ENCODE measurements at regions of chr11 and their contacts with region 1.

Region 1: DNA sequence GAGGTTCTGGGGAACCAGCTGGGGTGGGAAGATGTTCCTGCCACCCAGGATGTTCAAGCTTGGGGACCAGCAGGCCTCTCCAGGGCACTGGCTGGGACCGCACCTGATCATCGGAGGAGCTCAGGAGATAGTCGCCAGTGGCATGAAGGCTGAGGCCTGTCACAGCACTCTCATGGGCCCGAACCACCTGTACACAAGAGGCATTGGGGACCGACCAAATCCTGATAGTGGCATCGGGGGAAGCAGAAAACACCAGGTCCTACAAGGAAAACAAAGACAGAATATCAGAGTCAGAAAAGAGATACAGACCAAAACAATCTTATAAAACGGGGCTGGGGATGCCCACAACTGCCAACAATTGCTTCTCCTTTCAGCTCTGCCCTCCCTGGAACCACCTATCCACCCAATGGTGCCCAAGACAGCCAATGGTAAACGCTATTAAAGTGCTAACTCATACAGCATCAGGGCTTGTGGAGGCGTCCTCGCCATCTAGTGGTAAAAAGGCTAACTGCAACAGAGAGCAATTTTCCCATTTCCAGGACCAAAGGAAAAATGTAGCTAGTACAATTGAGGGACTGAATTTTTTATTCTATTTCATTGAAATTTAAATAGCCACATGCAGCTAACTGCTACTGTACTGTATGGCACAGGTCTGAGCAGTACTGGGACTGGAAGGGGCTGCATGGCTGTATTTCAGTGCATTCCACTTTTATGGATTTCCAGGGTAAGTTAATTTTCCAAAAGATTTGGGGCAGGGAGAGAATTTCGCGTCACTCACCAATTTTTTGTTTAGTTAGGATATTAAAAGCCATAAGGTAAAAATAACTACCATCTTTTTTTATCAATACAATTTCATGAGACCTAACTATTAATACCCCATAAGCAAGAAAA is 7.1 kb downstream of the PRPF19 start:
- DNase-seq: peak; percentile 41 to 69
- H3K4me3 ChIP-seq: no peak overlapping the region
- H3K4me1 ChIP-seq: no peaks in the 10 kb centered on the region
- H3K27me3 ChIP-seq: no peaks in the 10 kb centered on the region

Region 2: DNA sequence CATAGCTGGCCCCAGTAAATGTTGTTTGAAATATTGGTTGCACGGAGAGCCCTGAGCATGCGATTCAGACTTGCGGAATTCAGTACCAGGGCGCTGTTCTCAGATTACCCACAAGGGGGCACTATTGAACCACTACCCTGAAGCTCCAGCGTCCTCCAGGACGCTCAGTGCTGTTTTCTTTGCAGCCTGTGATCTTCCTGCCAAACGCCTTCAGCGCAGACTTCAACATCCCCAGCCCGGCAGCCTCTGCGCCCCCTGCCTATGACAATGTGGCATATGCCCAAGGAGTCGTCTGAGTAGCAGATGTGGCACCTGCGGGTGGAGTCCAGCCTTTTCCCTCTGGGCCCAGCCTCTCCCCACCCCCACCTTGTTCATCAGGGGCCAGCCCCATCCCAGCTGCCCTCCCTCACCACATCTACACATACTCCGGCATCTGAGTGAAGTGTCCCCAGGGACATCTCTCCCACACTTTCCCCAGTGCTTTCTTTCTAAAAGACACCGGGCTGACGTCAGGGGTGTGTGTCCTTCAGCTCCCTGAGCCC is 123.8 kb before region 1 on chr11:
- in situ Hi-C with region 1: loop called (anchors 10 kb)
- DNase-seq: peak; percentile 84 to 90
- H3K4me3 ChIP-seq: no peak overlapping the region
- H3K4me1 ChIP-seq: no peaks in the 10 kb centered on the region
- H3K27me3 ChIP-seq: no peaks in the 10 kb centered on the region

Region 3: DNA sequence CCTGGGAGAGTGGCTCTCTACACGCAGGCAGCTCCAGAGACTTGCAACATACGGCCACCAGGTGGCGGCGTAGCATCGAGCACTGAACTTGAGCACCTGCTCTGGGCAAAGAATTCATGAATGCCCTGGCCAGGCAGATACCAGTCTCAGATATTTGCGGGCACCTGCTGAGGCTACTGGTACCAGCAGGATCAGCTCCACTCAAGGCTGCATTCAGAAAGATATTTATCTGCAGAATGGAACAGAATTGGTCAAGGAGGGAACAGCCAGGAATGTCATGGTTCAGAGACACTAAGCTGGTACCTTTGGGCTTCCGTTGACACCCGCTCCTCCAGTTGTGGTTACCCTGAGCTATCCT is 68.2 kb before region 1 on chr11:
- in situ Hi-C with region 1: no loop called
- DNase-seq: peak; percentile 44 to 86
- H3K4me3 ChIP-seq: no peak overlapping the region
- H3K4me1 ChIP-seq: no peaks in the 10 kb centered on the region
- H3K27me3 ChIP-seq: no peaks in the 10 kb centered on the region

Region 4: DNA sequence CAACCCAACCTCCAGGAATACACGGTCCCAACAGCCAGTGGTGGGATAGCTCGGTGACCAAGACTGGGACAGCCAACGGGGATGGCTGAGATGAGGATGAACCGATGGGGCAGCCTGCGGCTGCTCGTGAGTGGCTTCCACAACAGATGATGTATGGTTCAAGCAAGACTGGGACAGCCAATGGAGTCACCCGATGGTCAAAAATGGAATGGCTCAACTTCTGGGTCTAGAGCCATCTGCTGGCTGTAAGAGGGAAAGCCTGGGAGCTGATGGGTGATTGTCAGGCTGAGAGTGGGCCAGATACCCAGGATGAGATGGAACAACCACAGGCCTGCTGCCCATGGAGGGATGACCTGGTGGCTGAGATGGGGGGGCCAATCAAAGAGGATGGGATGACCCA is 646.0 kb after region 1 on chr11:
- in situ Hi-C with region 1: no loop called
- DNase-seq: no peak
- H3K4me3 ChIP-seq: no peak overlapping the region
- H3K4me1 ChIP-seq: no peaks in the 10 kb centered on the region
- H3K27me3 ChIP-seq: peaks cover 17% of the 10 kb centered on the region